Activated CD8-positive, alpha-beta memory T cell treated with anti-CD3 and anti-CD28 coated beads, Interleukin-2, amount 10 ng/mL, durations not matched to agents 7 days and 5 days (primary cell): ENCODE measurements at regions of chr7 and their contacts with region 1.

Region 1: GRCh38 chr7:56033671-56034432 is 17.4 kb downstream of the PSPH start:
- DNase-seq: peak; percentile 78
- ATAC-seq: peak; percentile 97
- H3K4me3 Mint-ChIP-seq: peak overlapping the region; percentile 84
- H3K27ac Mint-ChIP-seq: peak overlapping the region; percentile 84
- H3K4me1 Mint-ChIP-seq: peaks cover 9% of the 10 kb centered on the region
- H3K27me3 Mint-ChIP-seq: no peaks in the 10 kb centered on the region

Region 2: DNA sequence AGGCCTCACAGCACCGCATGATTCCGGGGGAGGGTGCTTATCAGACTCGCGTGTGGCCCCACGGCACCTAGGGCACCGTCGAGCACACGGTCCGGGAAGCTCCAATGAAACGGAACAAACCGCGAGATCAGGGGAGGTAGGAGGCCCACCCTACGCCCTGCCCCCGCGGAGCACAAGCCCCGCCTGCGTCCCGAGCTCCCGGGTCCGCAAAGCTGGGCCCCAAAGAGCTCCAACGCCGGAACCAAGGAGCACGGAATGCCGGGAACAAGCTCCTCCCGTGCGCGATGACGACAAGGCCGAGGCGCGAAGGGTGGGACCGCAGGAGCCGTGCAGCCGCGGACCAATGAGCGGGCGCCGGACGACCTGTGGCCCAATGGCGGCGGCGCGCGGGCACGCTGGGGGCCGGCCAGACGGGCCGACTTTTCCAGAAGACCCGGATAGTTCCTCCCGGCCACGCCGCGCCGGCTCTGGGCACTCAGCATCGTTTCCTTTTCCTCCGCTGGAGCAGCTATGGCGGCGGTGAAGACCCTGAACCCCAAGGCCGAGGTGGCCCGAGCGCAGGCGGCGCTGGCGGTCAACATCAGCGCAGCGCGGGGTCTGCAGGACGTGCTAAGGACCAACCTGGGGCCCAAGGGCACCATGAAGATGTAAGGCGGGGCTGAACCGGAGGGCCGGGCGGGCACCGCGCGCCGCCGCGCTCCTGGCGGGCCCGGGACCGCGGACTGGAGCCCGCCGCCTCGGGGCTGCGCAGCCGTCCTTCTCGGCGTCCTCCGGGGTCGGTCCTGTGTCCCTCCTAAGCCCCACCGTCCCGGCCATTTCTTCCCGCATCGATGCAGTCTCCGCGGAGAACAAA is 17.7 kb after region 1 on chr7 and contains the starts of genes CCT6A and PSPH:
- CTCF ChIA-PET with region 1: interaction called, 11 read pairs
- DNase-seq: peak; percentile 93
- ATAC-seq: peak; percentile 96
- H3K4me3 Mint-ChIP-seq: peak within 1 kb of the TSS; percentile 87
- H3K27ac Mint-ChIP-seq: peak within 1 kb of the TSS; percentile 87
- H3K4me1 Mint-ChIP-seq: peaks cover 50% of the 10 kb centered on the region
- H3K27me3 Mint-ChIP-seq: no peaks in the 10 kb centered on the region
- total RNA-seq, gene CCT6A: 120 to 181 TPM
- total RNA-seq, gene PSPH: 12.4 to 22.2 TPM